ENCODE measurements at regions of chr4 and their contacts with region 1.

Region 1: DNA sequence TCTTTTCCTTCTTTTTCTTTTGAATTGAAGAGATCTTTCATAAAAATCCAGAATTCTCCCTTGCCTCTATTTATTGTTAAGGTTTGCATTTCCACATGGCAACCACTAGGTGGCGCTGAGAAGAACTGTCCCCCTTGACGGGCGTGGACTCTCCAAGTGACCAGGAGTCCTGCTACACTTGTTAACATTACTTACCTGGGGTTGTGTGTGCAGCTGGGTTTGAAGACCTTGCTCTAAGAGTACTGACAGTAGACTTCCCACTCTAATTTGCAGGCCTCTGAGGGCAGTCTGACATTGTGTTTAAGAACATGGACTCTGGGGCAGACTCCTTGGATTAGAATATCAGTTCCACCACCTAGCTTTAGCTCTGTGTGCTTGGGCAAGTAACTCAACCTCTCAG is 52.8 kb downstream of the GPRIN3 start:
- DNase-seq: peak; percentile 80
- H3K4me3 Mint-ChIP-seq: no peak overlapping the region
- H3K27ac Mint-ChIP-seq: peak overlapping the region; percentile 18
- H3K4me1 Mint-ChIP-seq: peaks cover 64% of the 10 kb centered on the region
- H3K27me3 Mint-ChIP-seq: no peaks in the 10 kb centered on the region

Region 2: DNA sequence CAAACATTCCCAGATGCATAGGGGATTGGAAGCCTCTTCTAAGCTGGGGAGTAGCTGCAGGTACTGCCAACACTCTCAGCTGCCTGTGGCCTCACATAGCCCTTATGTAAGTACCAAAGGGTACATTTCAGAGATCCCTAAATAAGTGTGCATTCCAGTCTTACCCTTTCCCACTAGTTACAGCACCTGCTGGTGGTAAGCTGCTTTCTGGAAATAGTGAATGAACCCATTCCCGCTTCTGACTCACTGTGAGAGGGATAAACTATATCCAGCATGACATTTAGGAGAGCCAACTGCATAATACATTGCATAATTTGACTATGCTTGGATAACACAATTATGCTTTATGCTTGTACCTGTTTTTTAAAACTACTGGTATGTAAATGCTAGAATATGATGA is 346.8 kb before region 1 on chr4:
- intact Hi-C with region 1: no loop called
- DNase-seq: no peak
- H3K4me3 Mint-ChIP-seq: no peak overlapping the region
- H3K27ac Mint-ChIP-seq: no peak overlapping the region
- H3K4me1 Mint-ChIP-seq: no peaks in the 10 kb centered on the region
- H3K27me3 Mint-ChIP-seq: peaks cover 1% of the 10 kb centered on the region

Region 3: DNA sequence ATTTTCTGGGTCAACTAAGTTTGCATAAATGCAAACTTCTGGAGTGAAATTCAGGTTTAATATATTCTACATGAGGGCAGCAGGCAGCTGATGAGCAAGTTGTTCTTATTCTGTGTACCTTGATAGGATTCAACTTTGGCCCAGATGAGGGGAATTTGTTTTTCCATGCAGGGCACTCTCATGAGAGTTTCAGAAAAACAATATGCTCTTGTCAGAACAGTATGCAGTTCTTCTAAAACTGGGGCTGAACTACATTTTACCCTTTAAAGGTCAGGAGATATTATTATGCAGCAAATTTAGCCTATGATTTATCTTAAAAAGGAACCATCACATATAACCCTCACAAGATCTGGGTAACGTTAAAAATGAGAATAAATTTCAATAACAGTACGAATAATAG is 33.6 kb after region 1 on chr4:
- intact Hi-C with region 1: loop called (anchors 2 kb)
- DNase-seq: no peak
- H3K4me3 Mint-ChIP-seq: peak overlapping the region; percentile 72
- H3K27ac Mint-ChIP-seq: peak overlapping the region; percentile 91
- H3K4me1 Mint-ChIP-seq: peaks cover 91% of the 10 kb centered on the region
- H3K27me3 Mint-ChIP-seq: no peaks in the 10 kb centered on the region